ENCODE measurements at regions of chr19 and their contacts with region 1.

Region 1: GRCh38 chr19:11482384-11483050 is 1.7 kb upstream of the ELAVL3 start:
- DNase-seq: peak; percentile 80 to 98 (median 89)

Region 2: GRCh38 chr19:11293433-11294389 is 188.8 kb before region 1 on chr19:
- intact Hi-C with region 1: loop called (anchors 5 kb)
- DNase-seq: peak; percentile 80 to 98 (median 90)

Region 3: GRCh38 chr19:11435058-11435832 is 47.3 kb before region 1 on chr19 and contains the starts of genes ODAD3 and PRKCSH:
- intact Hi-C with region 1: loop called (anchors 2 kb)
- DNase-seq: peak; percentile 99 to 100 (median 100)

Region 4: DNA sequence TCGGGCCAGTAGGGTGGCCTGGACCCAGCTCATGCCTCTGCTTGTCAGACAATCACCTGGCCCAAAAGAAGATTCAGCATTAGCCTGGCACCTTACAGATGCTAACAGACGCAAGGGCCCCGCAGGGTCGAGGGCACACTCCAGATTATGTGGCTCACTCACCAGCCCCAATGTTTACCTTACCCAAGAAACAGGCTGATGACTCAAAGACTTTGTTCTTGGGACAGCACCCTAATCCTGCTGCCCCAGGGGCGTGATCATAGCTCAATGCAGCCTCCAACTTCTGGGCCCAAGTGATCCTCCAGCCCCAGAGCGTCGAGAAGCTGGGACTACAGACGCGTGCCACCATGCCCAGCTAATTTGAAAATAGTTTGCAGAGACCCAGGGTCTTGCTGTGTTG is 36.6 kb after region 1 on chr19:
- intact Hi-C with region 1: no loop called
- DNase-seq: no peak

Region 5: DNA sequence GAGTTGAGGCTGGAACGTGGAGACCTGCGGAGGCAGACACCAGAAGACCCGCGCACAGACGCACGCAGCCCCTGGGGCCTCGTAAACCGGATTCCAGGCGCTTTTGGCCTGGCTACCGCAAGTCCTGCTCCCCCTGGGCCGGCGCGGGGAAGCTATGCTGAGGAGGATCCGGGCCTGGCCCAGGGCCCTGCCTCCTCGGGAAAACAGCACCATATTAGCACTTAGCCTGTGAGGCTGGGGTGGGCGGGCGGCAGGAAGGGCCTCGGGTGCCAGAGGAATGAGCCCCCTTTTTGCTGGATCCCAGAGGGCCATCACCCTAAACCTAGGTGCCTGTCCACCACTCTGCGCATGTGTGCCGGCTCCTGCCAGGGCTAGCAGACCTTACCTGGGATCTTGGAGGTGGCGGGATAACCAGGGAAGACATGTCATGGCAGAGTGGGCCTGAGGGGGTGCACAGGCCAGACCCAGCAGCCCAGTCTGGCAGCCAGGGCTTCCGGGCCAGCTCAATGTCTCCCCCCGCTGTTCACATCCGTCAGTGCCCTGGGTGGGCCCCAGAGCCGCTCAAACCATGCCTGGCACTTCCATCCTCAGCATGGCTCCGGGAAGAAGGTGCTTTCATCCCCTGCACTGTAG is 69.2 kb after region 1 on chr19:
- intact Hi-C with region 1: no loop called
- DNase-seq: no peak

Measured in posterior cingulate gyrus (tissue), 11 donors.